HepG2 (cell line): ENCODE measurements at regions of chr1 and their contacts with region 1.

Region 1: DNA sequence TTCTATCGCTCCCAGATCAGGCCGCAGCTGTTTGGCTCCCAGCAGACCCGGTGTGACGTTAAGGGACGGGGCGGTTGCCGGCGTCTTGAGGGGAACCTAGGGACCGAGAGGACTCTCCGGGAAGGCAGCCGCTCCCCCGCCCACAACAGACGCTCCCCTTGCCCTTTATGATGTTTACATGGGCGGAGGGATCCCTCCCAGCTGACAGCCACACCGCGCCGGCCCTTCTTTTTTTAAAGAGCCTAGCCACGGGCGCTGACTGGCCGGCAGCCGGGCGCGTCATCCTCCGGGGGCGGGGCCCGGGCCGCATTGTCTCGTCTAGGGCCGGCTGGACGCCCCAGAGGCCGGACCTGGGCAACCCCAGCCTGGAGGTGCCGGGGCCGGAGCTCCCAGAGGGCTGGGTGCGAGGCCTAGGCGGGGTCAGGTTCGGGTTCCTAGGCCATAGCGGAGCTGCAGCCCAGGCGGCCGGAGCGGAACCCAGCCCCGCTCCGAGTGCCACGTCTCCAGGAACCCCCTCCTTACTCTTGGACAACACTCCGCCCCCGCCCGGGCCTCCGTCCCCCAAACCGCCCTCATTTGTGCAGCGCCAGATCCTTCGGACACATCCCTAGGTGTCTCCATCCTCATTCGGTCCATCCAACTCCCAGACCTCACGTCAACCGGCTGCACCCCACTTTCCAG is at the start of gene PCAT6:
- DNase-seq: peak; percentile 88
- ATAC-seq: peak; percentile 89
- H3K4me3 ChIP-seq: peak within 1 kb of the TSS; percentile 82 to 95 (median 94)
- H3K27ac ChIP-seq: peak within 1 kb of the TSS; percentile 53
- H3K4me1 ChIP-seq: peaks cover 56% of the 10 kb centered on the region
- H3K27me3 ChIP-seq: no peaks in the 10 kb centered on the region; a peak in 1 of 5 replicates
- CTCF ChIP-seq: 0 out of 2 replicates have a peak, but pooled peaks have one; percentile 2
- EP300 ChIP-seq: peak in 1 of 2 experiments; percentile 23; a peak in 1 of 4 replicates
- POLR2A ChIP-seq: peak; percentile 78 to 87
- RAD21 ChIP-seq: peak; percentile 24; the same call in 1 of the 2 replicates
- total RNA-seq, gene PCAT6: 0.55 and 0.60 TPM in 2 replicates

Region 2: DNA sequence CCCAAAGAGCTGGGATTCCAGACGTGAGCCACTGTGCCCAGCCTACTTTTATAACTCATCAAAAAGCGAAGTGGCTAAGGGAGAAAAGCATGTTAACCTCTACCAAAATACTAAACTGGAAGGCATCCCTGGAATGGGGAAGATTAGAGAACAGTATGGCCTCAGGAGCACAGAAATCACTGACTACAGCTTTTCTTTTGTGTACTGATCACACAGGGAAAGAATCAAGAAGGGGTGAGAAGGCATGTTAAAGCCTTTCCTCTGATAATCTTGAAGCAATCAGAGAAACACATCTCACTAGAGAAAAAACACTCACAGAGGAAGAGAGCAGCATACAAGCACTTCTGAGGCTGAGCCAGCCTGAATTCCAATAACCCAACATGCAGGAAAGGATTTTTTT is 10.7 kb after region 1 on chr1:
- CTCF ChIA-PET with region 1: no interaction called
- POLR2A ChIA-PET with region 1: interaction called, 16 read pairs
- in situ Hi-C with region 1: no loop called
- intact Hi-C with region 1: no loop called
- DNase-seq: no peak
- ATAC-seq: no peak
- H3K4me3 ChIP-seq: no peak overlapping the region
- H3K27ac ChIP-seq: no peak overlapping the region
- H3K4me1 ChIP-seq: peaks cover 13% of the 10 kb centered on the region; the same call in 1 of the 2 replicates
- H3K27me3 ChIP-seq: peaks cover 0 to 24% of the 10 kb centered on the region in 2 experiments; a peak in 2 of 5 replicates
- CTCF ChIP-seq: no peak
- EP300 ChIP-seq: no peak
- POLR2A ChIP-seq: no peak
- RAD21 ChIP-seq: no peak

Region 3: GRCh38 chr1:202861420-202862200 is 50.9 kb after region 1 on chr1:
- CTCF ChIA-PET with region 1: no interaction called
- POLR2A ChIA-PET with region 1: interaction called, 74 read pairs
- in situ Hi-C with region 1: loop called (anchors 5 kb)
- intact Hi-C with region 1: loop called (anchors 2 kb)
- DNase-seq: peak; percentile 90
- ATAC-seq: peak; percentile 90
- H3K4me3 ChIP-seq: peak overlapping the region; percentile 79 to 91 (median 83)
- H3K27ac ChIP-seq: peak overlapping the region; percentile 95
- H3K4me1 ChIP-seq: peaks cover 61% of the 10 kb centered on the region
- H3K27me3 ChIP-seq: no peaks in the 10 kb centered on the region; a peak in 1 of 5 replicates
- CTCF ChIP-seq: no peak
- EP300 ChIP-seq: no peak
- POLR2A ChIP-seq: peak; percentile 80 to 95; a peak in 3 of 4 replicates
- RAD21 ChIP-seq: 0 out of 2 replicates have a peak, but pooled peaks have one; percentile 6

Region 4: DNA sequence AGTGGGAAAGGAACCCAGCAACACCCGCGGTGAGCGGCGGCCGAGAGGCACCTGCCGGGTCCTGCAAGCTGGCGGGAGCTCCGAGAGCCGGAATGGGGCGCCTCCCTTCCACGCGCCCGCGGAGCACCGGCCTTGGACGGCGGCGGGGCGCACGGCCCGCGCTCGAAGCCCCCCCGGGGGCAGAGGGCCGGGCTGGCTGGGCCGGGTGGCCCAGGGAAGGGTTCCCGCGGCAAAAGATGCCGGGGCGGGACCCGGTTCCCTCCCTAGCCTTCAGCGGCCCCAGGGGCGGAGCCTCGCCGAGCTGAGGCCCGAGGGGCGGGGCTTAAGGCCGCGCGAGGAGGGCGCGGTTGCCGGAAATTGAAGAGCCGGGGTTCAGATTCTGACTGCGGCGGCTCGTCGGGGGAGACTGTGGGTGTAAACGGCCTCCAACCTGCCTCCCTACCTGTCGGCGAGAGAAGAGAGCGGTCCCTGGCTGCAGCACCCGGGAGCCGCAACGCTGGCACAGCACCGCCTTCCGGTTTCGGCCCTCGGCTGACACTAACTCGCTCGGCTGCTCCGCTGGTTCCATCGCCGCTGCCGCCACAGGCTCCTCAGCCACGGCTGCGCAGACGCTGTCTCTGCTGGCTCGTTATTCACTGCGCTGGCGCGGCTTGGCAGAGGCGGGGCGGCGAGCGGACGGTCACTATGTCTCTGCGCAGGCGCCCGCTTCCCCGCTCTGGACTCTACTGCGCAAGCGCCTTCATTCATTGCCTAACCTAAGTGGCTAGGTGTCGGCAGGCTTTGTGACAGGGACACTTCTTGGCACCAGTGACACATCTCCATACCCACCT is 78.0 kb after region 1 on chr1 and contains the start of gene RABIF:
- CTCF ChIA-PET with region 1: no interaction called
- POLR2A ChIA-PET with region 1: interaction called, 21 read pairs
- in situ Hi-C with region 1: no loop called
- intact Hi-C with region 1: loop called (anchors 2 kb)
- DNase-seq: peak; percentile 93
- ATAC-seq: peak; percentile 97
- H3K4me3 ChIP-seq: peak within 1 kb of the TSS; percentile 78 to 93 (median 89)
- H3K27ac ChIP-seq: peak within 1 kb of the TSS; percentile 95
- H3K4me1 ChIP-seq: peaks cover 15% of the 10 kb centered on the region
- H3K27me3 ChIP-seq: no peaks in the 10 kb centered on the region
- CTCF ChIP-seq: peak; percentile 48
- EP300 ChIP-seq: no peak
- POLR2A ChIP-seq: peak; percentile 95 to 96
- RAD21 ChIP-seq: peak; percentile 33
- total RNA-seq, gene RABIF: 8.3 and 11.1 TPM in 2 replicates